Activated CD4-positive, alpha-beta T cell treated with anti-CD3 and anti-CD28 coated beads for 36 hours (primary cell): ENCODE measurements at regions of chr21 and their contacts with region 1.

Region 1: GRCh38 chr21:31786164-31786920 is 54.4 kb upstream of the SCAF4 start:
- DNase-seq: no peak
- ATAC-seq: no peak
- H3K4me3 Mint-ChIP-seq: no peak overlapping the region
- H3K27ac Mint-ChIP-seq: no peak overlapping the region
- H3K4me1 Mint-ChIP-seq: peaks cover 4% of the 10 kb centered on the region
- H3K27me3 Mint-ChIP-seq: peaks cover 12% of the 10 kb centered on the region

Region 2: DNA sequence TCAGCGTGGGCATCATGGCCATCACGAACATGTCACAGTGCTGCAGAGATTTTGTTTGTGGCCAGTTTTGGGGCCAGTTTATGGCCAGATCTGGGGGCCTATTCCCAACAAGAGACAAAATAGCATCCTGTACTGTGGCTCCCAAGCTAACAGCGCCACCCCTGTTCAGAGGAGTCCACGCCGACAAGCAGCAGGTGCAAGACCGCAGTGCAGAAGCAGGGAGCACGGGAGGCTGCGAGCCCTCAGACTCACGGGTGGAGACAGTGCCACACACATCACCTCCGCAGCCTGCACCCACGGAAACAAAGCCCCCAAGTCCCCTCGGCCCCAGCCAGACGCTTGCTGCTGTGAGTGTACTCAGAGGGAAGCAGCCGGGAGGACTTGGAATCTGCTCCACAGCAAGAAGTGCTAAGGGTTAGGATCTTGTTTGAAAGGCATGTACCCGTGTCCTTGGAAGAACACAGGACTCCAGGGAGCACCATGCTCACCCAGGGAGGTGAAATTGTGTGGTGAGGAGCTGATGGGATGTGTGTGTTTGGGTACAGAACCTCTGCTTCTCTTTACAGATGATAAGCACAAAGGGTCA is 791.9 kb after region 1 on chr21:
- CTCF ChIA-PET with region 1: no interaction called
- POLR2A ChIA-PET with region 1: no interaction called
- intact Hi-C with region 1: loop called in 1 of 2 experiments (anchors 5 kb)
- DNase-seq: peak; percentile 56
- ATAC-seq: peak; percentile 63
- H3K4me3 Mint-ChIP-seq: no peak overlapping the region
- H3K27ac Mint-ChIP-seq: no peak overlapping the region
- H3K4me1 Mint-ChIP-seq: no peaks in the 10 kb centered on the region
- H3K27me3 Mint-ChIP-seq: no peaks in the 10 kb centered on the region